HEK293T (cell line): ENCODE measurements at regions of chr12 and their contacts with region 1.

Region 1: DNA sequence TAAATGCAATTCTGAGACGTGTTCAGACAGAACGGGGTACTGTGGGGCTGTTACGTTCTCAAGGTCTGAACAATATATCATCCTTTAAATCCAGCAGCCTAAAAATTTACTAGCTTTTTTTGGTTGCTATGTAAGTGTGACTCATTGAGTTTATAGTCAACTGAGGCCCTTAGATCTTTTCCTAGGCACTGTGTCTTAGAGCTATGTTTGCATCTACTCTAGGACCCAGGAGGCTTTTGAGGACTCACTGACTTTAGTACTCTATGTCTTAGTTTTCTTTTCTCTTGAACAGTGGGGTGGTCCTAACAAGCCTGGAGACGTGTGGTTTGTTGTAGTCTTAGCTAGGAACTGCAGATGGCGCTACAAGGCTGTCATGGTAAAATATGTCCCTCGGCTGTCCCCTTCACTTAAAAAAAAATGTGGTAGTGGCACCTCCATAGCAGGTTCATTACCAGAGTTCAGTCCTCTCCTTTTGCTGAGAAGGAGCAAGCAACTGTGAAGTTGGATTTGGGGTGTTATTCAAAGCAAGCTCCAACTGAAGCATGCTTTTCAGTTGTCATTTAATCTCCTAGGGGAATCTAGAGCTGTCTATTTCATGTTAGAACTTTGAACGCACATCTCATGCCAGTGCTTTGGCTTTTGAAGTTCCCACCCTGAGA is 8.7 kb upstream of the SPATS2 start:
- DNase-seq: peak; percentile 75

Region 2: DNA sequence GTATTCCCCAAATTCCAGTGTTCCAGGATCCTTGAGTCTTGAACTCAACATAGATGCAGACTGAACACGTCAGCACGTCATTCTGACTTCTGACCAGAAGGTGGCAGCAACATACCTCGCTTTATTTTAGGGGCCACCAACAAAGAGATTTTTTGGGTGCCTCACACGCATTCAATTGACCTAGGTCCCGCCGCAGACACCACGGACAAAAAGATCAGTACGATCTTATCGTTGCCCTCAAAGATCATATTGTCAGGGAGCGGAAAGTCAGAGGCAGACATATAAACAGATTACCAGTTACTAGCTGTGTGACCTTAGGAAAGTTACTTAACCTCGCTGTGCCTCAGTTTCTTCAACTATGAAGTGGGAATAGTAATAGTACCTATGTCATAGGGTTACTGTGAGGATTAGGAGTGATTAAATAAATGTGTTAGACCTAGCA is 70.2 kb before region 1 on chr12:
- CTCF ChIA-PET with region 1: interaction called, 25 read pairs
- POLR2A ChIA-PET with region 1: no interaction called
- DNase-seq: peak; percentile 76

Region 3: GRCh38 chr12:49331380-49332222 is 27.0 kb before region 1 on chr12:
- CTCF ChIA-PET with region 1: interaction called, 38 read pairs
- POLR2A ChIA-PET with region 1: no interaction called
- DNase-seq: peak; percentile 77

Region 4: GRCh38 chr12:49342066-49342913 is 16.3 kb before region 1 on chr12:
- CTCF ChIA-PET with region 1: interaction called, 43 read pairs
- POLR2A ChIA-PET with region 1: interaction called, 6 read pairs
- DNase-seq: peak; percentile 88

Region 5: DNA sequence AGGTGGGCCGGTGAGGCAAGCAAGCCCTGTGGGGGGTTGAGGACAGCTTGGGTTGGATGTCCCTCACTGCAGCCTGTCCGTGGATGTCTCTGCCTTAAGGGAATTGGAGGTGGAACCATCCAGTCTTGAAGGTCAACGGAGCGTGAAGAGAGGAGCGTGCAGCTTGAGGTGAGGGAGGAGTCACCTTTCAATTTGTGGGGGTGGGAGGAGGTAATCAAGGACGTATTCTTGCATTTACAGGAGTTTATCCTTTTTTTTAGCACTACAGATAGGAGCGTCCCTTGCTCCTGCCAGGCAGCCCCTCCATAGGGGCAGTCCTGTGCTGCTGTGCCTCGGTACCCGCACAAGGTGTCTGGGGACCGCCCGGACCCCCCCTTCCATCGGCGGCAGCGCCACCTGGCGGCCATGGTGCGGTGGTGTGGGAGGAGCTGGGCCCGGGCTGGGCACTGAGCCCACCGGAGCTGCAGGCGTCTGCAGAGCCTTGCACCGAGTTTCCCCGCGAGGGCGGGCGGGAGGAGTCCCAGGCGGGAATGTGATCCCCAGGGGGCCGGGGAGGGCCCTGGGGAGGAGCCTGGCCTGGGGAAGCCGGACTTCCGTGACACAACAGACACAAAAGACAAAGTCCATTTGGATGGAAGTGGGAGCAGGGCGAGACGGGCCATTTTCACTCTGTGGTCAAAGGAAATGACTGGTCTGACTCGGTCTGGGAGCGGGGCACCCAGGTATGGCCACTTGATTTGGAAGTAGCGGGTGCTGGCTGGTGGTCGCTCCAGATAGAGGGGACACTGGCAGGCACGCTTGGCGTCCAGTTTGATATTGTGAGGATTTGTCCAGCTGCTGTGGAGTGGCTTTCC is 11.0 kb before region 1 on chr12:
- CTCF ChIA-PET with region 1: interaction called, 43 read pairs
- POLR2A ChIA-PET with region 1: interaction called, 6 read pairs
- DNase-seq: peak; percentile 89

Region 6: DNA sequence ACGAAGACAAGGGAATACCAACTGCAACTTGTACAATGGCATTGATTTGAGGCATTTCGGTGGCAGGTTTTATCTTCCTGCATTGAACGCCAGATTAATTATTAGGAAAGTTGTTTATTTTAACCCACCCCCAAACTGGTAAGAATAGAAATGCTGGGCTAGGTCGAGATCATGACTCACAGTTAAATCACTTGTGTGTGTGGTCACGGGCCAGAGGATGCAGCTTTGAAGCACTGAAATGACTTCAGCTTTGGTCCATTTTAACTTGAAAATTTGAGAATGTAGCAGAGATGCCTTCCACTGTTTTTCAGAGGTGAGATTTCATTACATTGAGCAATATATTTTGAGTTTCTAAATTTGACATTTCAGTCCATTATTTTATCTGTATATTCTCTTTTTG is 156.7 kb after region 1 on chr12:
- CTCF ChIA-PET with region 1: interaction called, 88 read pairs
- POLR2A ChIA-PET with region 1: no interaction called
- DNase-seq: no peak